ENCODE measurements at regions of chr17 and their contacts with region 1.

Region 1: DNA sequence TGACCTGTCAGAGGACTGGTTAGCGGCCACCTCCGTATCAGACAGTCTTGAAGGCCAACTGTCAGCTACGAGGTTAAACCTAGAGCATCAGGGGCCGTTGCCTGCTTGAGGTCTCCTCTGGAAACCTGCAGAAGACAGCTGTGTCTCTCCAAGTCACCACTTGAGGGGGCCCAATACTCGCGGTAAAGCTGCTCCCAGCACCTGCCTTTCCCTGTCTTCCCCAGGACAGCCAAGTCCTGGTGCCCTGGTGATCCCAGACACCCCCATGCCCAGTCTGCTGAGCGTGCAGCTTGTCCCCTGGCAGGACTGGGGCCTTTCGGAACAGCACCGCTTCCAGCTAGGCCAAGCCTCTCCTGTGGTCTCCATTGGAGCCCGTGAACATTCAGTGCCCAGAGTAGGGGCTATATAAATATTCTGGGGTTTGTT is 80.1 kb downstream of the DNAH17 start:
- DNase-seq: peak; percentile 67 to 79 (median 74)
- ATAC-seq: peak; percentile 94
- H3K4me3 ChIP-seq: no peak overlapping the region
- H3K27ac ChIP-seq: no peak overlapping the region
- H3K4me1 ChIP-seq: peaks cover 0 to 7% of the 10 kb centered on the region in 2 experiments; a peak in 2 of 5 replicates
- H3K27me3 ChIP-seq: peaks cover 57 to 78% of the 10 kb centered on the region in 2 experiments
- CTCF ChIP-seq: peak; percentile 80 to 85 (median 84)
- EP300 ChIP-seq: no peak
- POLR2A ChIP-seq: no peak
- RAD21 ChIP-seq: peak; percentile 84 to 95

Region 2: DNA sequence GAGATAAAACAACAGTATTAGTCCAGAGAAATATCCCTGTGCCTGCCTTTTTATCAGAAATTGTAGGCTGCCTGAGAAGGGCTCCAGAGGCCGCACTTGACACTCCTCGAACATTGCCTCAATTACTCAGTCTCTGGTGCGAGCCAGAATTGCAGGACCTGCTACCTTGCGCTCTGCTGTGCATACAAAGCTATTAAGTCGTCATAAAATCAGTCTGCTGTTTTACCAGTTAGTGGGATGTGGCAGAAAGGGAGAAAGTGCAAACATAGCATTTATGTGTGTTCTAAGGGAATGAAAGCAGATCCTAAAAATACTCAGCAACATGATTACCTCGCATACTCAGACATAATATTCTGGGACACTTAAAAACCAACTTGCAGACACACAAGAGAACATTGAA is 439.1 kb before region 1 on chr17:
- CTCF ChIA-PET with region 1: no interaction called
- POLR2A ChIA-PET with region 1: no interaction called
- in situ Hi-C with region 1: no loop called
- intact Hi-C with region 1: no loop called
- DNase-seq: no peak
- ATAC-seq: peak; percentile 36; the same call in 1 of the 3 replicates
- H3K4me3 ChIP-seq: no peak overlapping the region
- H3K27ac ChIP-seq: no peak overlapping the region
- H3K4me1 ChIP-seq: peaks cover 14 to 18% of the 10 kb centered on the region in 2 experiments; a peak in 3 of 5 replicates
- H3K27me3 ChIP-seq: no peaks in the 10 kb centered on the region
- CTCF ChIP-seq: no peak
- EP300 ChIP-seq: no peak
- POLR2A ChIP-seq: no peak
- RAD21 ChIP-seq: no peak

Region 3: DNA sequence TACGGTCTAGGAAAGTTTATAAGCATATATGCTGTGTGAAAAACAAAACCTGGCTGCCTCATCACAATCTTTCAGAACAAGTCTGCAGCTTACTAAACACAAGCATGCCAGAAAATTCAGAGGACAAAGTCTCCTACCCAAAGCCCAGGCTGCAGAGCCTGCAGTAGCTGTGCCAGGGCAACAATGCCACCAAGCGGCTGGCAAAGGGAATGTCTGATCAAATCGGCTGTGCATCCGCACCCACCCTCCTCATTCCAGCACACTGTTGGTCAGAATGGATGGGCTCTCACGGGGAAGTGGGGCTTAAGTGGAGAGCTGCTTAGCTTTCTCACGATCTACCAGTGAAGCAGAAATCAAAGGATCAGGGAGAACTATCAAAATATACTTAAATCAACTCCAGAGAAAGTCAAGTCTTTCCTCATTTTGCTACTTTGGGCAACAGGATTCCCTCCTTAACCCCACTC is 211.4 kb after region 1 on chr17:
- CTCF ChIA-PET with region 1: interaction called, 3 read pairs
- POLR2A ChIA-PET with region 1: no interaction called
- in situ Hi-C with region 1: no loop called
- intact Hi-C with region 1: loop called (anchors 5 kb)
- DNase-seq: peak; percentile 59 to 62 (median 60)
- ATAC-seq: peak; percentile 82
- H3K4me3 ChIP-seq: no peak overlapping the region
- H3K27ac ChIP-seq: no peak overlapping the region
- H3K4me1 ChIP-seq: peaks cover 5 to 21% of the 10 kb centered on the region in 2 experiments; a peak in 4 of 5 replicates
- H3K27me3 ChIP-seq: no peaks in the 10 kb centered on the region
- CTCF ChIP-seq: peak; percentile 70 to 74 (median 71)
- EP300 ChIP-seq: no peak
- POLR2A ChIP-seq: no peak
- RAD21 ChIP-seq: peak; percentile 68 to 76

Region 4: GRCh38 chr17:78745407-78746088 is 248.4 kb after region 1 on chr17:
- CTCF ChIA-PET with region 1: interaction called, 4 read pairs
- POLR2A ChIA-PET with region 1: no interaction called
- in situ Hi-C with region 1: no loop called
- intact Hi-C with region 1: loop called (anchors 2 kb)
- DNase-seq: peak in 1 of 4 experiments; percentile 67
- ATAC-seq: peak; percentile 27; the same call in 1 of the 3 replicates
- H3K4me3 ChIP-seq: no peak overlapping the region
- H3K27ac ChIP-seq: no peak overlapping the region
- H3K4me1 ChIP-seq: peaks cover 13 to 29% of the 10 kb centered on the region in 2 experiments
- H3K27me3 ChIP-seq: no peaks in the 10 kb centered on the region
- CTCF ChIP-seq: peak; percentile 50 to 69 (median 57); a peak in 5 of 6 replicates
- EP300 ChIP-seq: no peak
- POLR2A ChIP-seq: no peak
- RAD21 ChIP-seq: peak; percentile 29 to 66; a peak in 3 of 4 replicates

Region 5: DNA sequence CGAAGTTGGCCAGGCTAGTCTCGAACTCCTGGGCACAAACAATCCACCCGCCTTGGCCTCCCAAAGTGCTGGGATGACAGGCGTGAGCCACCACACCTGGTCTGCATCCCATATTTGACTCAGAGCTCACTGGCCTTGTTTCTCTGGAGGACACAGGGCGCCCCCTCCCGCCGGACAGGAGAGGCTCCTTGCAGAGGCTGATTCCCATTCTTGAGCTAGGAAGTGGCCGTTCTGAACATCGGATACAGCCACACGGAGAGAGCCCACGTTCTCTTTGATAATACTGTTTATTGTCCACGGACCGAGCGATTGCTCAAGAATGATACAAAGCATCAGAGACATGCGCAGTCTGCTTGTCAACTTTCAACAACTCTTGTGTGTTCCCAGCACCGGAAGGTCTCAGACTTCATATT is 355.6 kb after region 1 on chr17:
- CTCF ChIA-PET with region 1: no interaction called
- POLR2A ChIA-PET with region 1: no interaction called
- in situ Hi-C with region 1: no loop called
- intact Hi-C with region 1: loop called (anchors 1 kb)
- DNase-seq: peak; percentile 58 to 76 (median 64)
- ATAC-seq: peak; percentile 92
- H3K4me3 ChIP-seq: no peak overlapping the region
- H3K27ac ChIP-seq: no peak overlapping the region
- H3K4me1 ChIP-seq: peaks cover 18 to 23% of the 10 kb centered on the region in 2 experiments
- H3K27me3 ChIP-seq: peaks cover 0 to 17% of the 10 kb centered on the region in 2 experiments; a peak in 2 of 5 replicates
- CTCF ChIP-seq: peak; percentile 75 to 83 (median 76)
- EP300 ChIP-seq: no peak
- POLR2A ChIP-seq: no peak
- RAD21 ChIP-seq: peak; percentile 52 to 82

Region 6: GRCh38 chr17:78970834-78971773 is 474.0 kb after region 1 on chr17:
- CTCF ChIA-PET with region 1: interaction called, 3 read pairs
- POLR2A ChIA-PET with region 1: no interaction called
- in situ Hi-C with region 1: no loop called
- intact Hi-C with region 1: loop called (anchors 2 kb)
- DNase-seq: peak; percentile 77 to 86 (median 85)
- ATAC-seq: peak; percentile 83
- H3K4me3 ChIP-seq: no peak overlapping the region
- H3K27ac ChIP-seq: no peak overlapping the region
- H3K4me1 ChIP-seq: peaks cover 0 to 52% of the 10 kb centered on the region in 2 experiments; a peak in 2 of 5 replicates
- H3K27me3 ChIP-seq: peaks cover 25 to 49% of the 10 kb centered on the region in 2 experiments
- CTCF ChIP-seq: peak; percentile 92 to 97 (median 92)
- EP300 ChIP-seq: no peak
- POLR2A ChIP-seq: no peak
- RAD21 ChIP-seq: peak; percentile 66 to 83

Measured in K562 (cell line).